ENCODE measurements at regions of chr15 and their contacts with region 1.

Region 1: DNA sequence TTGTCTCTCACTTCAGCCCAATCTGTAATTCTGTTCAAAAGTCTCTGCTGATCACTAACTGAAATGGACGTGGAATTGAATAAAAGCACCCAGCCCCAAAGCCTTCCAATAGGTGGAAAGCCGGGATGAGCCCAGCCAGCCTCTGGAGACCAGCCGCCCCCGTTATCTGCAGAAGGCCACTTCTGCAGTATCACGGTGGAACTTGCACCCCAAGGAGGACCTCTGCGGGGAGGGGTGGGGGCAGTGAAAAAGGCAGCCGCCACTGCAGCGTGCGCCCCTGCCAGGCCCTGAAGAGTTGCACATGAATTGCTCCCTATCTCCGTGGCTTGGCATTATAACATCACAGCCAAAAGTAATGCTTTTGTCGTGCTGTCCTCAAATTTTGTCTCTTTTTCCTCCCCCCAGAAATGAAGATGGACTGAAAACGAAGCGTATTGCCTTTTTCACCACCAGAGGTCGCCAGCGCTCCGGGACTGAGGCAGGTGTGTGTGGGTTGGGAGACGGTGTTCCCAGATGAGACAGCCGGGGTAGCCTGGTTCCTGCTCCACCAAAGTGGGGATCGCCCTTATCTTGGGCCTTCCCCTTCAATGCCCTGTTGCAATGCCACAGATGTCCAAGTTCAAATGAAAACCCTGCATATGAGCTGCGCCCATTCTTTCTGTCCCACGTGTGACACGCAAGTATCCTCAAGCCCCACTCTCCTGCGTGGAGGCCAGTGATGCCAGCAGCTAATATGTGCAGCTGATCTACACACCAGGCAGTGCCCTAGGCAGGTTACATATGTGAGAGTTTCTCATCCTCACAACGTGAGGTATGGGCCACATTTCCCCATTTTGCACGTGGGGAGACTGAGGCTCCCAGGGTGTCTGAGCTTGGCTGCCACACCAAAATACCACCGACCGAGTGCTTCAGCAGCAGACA is 96.0 kb downstream of the LRRK1 start:
- DNase-seq: peak; percentile 73 to 86 (median 75)
- ATAC-seq: peak; percentile 73 to 79 (median 76)
- H3K4me3 ChIP-seq: no peak overlapping the region
- H3K27ac ChIP-seq: no peak overlapping the region
- H3K4me1 ChIP-seq: peaks cover 0 to 19% (median 0%) of the 10 kb centered on the region in 12 donors
- H3K27me3 ChIP-seq: no peaks in the 10 kb centered on the region
- CTCF ChIP-seq: peak; percentile 81 to 94 (median 87)
- POLR2A ChIP-seq: no peak

Region 2: GRCh38 chr15:100968050-100968966 is 46.9 kb before region 1 on chr15:
- intact Hi-C with region 1: no loop called
- DNase-seq: no peak
- ATAC-seq: no peak
- H3K4me3 ChIP-seq: no peak overlapping the region
- H3K27ac ChIP-seq: no peak overlapping the region
- H3K4me1 ChIP-seq: peaks cover 0 to 6% (median 0%) of the 10 kb centered on the region in 12 donors
- H3K27me3 ChIP-seq: peaks cover 3 to 29% (median 9%) of the 10 kb centered on the region in 9 donors
- CTCF ChIP-seq: no peak
- POLR2A ChIP-seq: no peak

Region 3: GRCh38 chr15:101088788-101089583 is 73.8 kb after region 1 on chr15:
- intact Hi-C with region 1: loop called in 9 of 10 experiments (anchors 1 to 10 kb)
- DNase-seq: peak; percentile 67 to 90 (median 77)
- ATAC-seq: peak in 3 of 4 donors; percentile 62 to 82 (median 78)
- H3K4me3 ChIP-seq: peak overlapping the region in 5 of 12 donors; percentile 0 to 33 (median 20)
- H3K27ac ChIP-seq: peak overlapping the region in 3 of 12 donors; percentile 52 to 83 (median 55)
- H3K4me1 ChIP-seq: peaks cover 0 to 39% (median 31%) of the 10 kb centered on the region in 12 donors
- H3K27me3 ChIP-seq: no peaks in the 10 kb centered on the region
- CTCF ChIP-seq: peak; percentile 98 to 100 (median 99)
- POLR2A ChIP-seq: no peak

Region 4: GRCh38 chr15:101188637-101189408 is 173.6 kb after region 1 on chr15:
- intact Hi-C with region 1: loop called in 1 of 10 experiments (anchors 10 kb)
- DNase-seq: peak in 1 of 5 donors; percentile 42
- ATAC-seq: peak in 3 of 4 donors; percentile 14 to 36 (median 30)
- H3K4me3 ChIP-seq: peak overlapping the region in 10 of 12 donors; percentile 4 to 56 (median 43)
- H3K27ac ChIP-seq: peak overlapping the region; percentile 63 to 93 (median 82)
- H3K4me1 ChIP-seq: peaks cover 0 to 96% (median 50%) of the 10 kb centered on the region in 12 donors
- H3K27me3 ChIP-seq: no peaks in the 10 kb centered on the region
- CTCF ChIP-seq: no peak
- POLR2A ChIP-seq: no peak

Region 5: DNA sequence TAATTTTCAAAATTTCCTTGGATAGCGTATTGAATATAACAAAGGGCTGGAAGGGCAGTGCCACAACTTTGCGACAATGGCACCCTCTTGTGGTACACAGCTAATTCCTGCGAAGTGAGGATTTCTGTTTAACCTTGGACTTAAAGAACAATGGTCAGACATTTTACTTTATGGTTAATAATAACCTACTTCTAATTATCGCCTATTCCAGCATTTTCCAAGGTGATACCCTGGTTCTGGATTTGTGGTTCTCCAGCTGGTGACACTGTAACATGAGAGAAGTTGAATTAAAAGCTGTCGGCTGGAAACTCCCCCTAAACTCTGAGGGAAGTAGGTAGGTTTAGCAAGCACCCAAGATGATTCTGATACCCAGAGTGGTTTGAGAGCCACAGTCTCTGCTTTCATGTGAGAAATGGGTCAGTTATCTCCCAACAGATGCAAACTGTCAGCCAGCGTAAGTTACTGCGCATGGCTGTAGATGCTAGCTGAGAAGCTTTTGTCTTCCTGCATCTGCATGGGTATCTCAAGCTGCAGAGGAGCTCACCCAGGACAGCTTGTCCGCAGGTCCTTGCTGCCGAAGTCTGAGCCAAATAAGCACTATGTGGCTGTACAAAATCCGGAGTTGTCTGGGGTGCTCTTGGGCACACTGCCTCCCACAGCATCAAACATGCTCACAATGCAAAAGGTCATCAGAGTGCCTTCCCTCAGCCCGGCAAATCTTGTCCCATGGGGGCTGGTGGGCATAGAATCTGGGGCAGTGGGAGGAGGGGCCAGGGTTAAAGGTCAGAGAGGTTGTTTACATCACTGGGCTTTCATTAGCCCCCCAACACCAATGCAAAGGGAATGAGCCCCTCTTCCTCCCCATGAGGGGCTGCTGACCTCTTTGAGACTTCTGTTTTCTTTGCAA is 243.3 kb after region 1 on chr15:
- intact Hi-C with region 1: loop called (anchors 1 to 2 kb)
- DNase-seq: peak in 3 of 5 donors; percentile 57 to 69 (median 68)
- ATAC-seq: peak in 3 of 4 donors; percentile 51 to 66 (median 61)
- H3K4me3 ChIP-seq: no peak overlapping the region
- H3K27ac ChIP-seq: no peak overlapping the region
- H3K4me1 ChIP-seq: peaks cover 0 to 23% (median 10%) of the 10 kb centered on the region in 12 donors
- H3K27me3 ChIP-seq: no peaks in the 10 kb centered on the region
- CTCF ChIP-seq: peak; percentile 67 to 94 (median 88)
- POLR2A ChIP-seq: no peak